Left cardiac atrium (tissue), 4 donors: ENCODE measurements at regions of chr19 and their contacts with region 1.

Region 1: GRCh38 chr19:53195265-53195903 is 2.2 kb upstream of the ZNF665 start:
- DNase-seq: peak; percentile 73
- ATAC-seq: peak; percentile 29 to 42

Region 2: GRCh38 chr19:53076977-53077376 is 118.4 kb before region 1 on chr19:
- intact Hi-C with region 1: loop called in 1 of 2 experiments (anchors 10 kb)
- DNase-seq: peak; percentile 72
- ATAC-seq: peak; percentile 76 to 84

Region 3: DNA sequence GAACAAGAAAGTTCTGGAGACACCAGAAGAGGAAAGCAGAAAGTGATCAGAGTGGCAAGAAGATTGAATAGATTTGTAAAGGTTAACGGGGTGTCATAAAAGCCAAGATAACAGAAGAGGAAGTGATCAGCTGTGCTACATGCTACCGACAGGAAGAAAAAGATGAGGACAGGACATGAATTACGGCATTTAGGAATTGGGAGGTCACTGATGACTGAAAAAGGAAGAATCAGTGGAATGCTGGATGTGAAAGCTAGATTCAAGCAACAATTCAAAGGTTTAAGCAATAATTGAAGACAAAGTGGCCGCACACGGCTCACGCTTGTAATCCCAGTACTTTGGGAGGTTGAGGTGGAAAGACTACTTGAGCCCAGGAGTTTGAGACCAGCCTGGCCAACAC is 107.3 kb before region 1 on chr19:
- intact Hi-C with region 1: no loop called
- DNase-seq: no peak
- ATAC-seq: no peak

Region 4: DNA sequence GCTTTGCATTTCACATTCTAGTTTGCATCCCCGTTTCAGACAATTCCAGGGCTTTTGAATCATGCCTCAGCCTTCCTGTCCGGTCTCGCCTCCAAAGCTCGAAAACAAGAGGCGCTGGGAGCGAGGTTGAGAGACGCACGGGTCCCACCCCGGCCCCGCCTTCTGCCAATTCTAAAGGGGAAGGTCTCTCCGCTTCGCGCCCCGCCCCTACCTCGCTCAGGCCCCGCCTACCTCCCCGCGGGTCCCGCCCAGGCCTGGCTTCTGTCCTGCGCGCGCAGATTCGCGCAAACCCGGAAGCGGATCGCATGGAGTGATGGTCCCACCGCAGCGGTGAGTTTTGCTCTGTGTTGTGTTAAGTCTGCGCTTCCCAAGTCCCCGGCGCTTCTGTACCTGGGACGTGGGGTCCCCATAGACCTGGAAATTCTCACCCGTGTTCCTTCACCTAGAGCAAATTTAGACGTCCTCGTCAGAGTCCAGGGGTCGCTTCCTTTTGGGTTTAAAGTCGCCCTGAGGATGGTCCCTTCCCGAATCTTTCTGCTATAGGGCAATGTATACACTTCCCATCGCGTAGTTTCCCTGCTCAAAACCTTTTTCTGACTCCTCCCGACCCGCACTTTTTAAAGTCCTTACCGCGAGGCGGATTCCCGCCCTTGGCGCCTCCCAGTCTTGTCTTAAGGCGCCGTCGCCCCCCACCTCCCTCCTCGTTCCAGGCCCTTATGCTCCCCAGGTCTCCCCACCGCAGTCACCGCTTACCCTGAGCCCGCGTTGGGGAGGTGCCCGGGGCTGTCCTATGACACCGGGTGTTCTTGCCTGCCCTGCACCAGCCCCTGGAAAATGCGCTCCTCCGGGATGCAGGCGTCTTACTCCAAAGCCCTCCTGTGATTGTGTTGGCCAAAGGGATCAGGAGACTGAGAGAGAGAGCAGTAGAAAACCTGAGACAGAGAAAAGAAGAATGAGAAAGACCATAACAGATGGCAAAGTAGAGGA is 138.4 kb after region 1 on chr19 and contains the start of gene ZNF845:
- intact Hi-C with region 1: loop called in 1 of 2 experiments (anchors 10 kb)
- DNase-seq: peak; percentile 96
- ATAC-seq: peak; percentile 100
- total RNA-seq, gene ZNF845: 4.6 TPM

Region 5: DNA sequence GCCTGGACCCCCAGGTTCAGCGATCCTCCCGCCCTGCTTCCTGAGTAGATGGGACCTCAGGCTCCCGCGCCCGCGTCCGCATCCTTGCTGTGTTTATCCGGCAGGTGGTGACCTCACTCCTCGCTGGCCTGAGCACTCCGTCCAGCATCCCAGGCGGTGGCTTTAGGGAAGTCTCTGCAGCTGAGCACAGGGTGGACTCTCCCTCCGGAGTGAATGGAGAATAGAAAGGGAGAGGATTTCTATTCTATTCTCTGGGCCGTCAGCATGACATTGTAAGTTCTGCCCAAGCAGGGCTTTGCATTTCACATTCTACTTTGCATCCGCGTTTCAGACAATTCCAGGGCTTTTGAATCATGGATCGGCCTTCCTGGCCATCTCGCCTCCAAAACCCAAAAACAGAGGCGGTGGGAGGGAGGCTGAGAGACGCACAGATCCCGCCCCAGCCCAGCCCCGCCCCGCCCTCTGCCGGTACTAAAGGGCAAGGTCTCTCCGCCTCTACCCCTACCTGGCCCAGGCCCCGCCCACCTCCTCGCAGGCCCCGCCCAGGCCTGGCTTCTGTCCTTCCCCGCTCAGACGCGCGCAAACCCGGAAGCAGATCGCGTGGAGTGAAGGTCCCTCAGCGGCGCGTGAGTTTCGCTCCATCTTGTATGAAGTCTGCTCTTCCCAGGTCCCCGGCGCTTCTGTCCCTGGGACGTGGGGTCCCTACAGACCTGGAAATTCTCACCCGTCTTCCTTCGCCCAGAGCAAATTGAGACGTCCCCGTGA is 169.9 kb after region 1 on chr19 and contains the start of gene ZNF525:
- intact Hi-C with region 1: loop called in 1 of 2 experiments (anchors 10 kb)
- DNase-seq: peak; percentile 90
- ATAC-seq: peak; percentile 100
- total RNA-seq, gene ZNF525: 5.9 to 6.9 TPM

Region 6: DNA sequence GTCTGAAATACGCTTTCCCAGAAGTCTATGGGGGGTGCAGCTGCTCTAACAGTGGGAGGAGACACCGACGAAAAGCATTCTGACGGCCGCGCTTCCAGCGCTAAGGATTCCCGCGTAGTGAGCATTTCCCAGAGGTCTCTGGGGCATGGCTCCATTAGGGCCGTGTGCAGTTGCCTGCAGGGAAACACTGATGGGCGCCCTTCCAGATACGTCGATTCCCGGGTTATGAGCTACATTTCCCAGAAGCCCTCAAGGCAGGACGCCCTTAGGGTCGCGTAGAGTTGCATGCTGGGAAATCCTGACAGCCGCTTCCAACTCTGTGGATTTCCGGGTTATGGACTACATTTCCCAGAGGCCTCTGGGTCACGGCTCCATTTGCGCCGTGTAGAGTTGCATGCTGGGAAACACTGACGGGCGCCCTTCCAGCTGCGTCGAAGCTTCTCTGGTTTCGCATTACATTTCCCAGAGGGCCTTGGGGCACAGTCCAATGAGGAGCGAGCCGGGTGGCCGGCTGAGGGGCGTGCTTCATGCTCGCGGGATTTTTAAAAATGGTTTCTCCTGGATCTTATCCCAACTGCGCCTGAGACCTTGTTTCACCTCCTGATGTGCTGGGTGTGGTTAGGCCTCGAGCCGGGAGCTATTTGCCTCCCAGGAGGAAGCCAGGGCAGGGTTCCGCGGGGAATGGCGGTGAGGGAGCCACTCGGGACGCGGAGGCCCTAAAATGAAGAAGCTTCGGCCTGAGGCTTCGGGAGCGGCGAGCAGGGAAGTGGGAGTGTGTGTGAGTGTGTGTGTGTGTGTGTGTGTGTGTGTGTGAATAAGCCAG is 325.4 kb after region 1 on chr19:
- intact Hi-C with region 1: loop called in 1 of 2 experiments (anchors 5 kb)
- DNase-seq: peak; percentile 98
- ATAC-seq: peak; percentile 98 to 99